ENCODE measurements at regions of chr7 and their contacts with region 1.

Region 1: DNA sequence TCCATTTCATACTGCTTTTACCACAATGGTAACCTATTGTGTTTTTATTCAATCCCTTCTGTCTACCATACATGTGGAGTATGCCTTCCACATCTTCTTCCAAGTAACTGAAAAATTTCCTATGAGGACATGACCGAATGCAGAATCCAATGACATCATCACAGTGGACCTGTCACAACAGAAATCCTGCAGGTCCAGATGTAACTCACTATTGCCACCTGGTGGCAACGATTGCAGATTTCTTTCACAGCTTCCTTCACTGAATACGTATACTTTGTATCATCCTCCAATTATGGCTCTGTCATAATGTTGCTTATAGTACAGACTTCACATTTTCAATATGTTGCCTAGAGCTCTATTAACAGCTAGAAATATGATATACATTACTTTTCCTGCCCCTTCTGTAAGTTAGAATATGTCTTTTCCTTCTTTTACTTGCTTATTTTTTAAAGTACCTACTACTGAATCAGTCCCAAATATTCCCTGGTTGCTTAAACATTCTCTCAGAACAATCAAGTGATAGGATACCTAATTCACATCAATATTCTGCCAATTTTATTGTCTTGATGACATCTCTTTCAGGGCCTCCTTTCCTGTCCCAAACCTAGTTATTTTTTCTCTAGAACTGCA is 45.4 kb downstream of the SLC13A1 start:
- DNase-seq: peak; percentile 14
- H3K4me3 Mint-ChIP-seq: no peak overlapping the region
- H3K27ac Mint-ChIP-seq: no peak overlapping the region
- H3K4me1 Mint-ChIP-seq: no peaks in the 10 kb centered on the region
- H3K27me3 Mint-ChIP-seq: no peaks in the 10 kb centered on the region

Region 2: GRCh38 chr7:122219253-122219865 is 935.0 kb before region 1 on chr7:
- intact Hi-C with region 1: loop called (anchors 5 kb)
- DNase-seq: no peak
- H3K4me3 Mint-ChIP-seq: no peak overlapping the region
- H3K27ac Mint-ChIP-seq: no peak overlapping the region
- H3K4me1 Mint-ChIP-seq: no peaks in the 10 kb centered on the region
- H3K27me3 Mint-ChIP-seq: no peaks in the 10 kb centered on the region

Region 3: GRCh38 chr7:123120286-123120685 is 34.1 kb before region 1 on chr7:
- intact Hi-C with region 1: no loop called
- DNase-seq: no peak
- H3K4me3 Mint-ChIP-seq: no peak overlapping the region
- H3K27ac Mint-ChIP-seq: no peak overlapping the region
- H3K4me1 Mint-ChIP-seq: no peaks in the 10 kb centered on the region
- H3K27me3 Mint-ChIP-seq: no peaks in the 10 kb centered on the region

Region 4: GRCh38 chr7:123338688-123339087 is 184.3 kb after region 1 on chr7:
- intact Hi-C with region 1: no loop called
- DNase-seq: no peak
- H3K4me3 Mint-ChIP-seq: no peak overlapping the region
- H3K27ac Mint-ChIP-seq: no peak overlapping the region
- H3K4me1 Mint-ChIP-seq: no peaks in the 10 kb centered on the region
- H3K27me3 Mint-ChIP-seq: no peaks in the 10 kb centered on the region